Heart right ventricle (tissue), 16 donors: ENCODE measurements at regions of chr21 and their contacts with region 1.

Region 1: GRCh38 chr21:31088315-31088714 is 50.0 kb upstream of the KRTAP19-8 start:
- DNase-seq: no peak
- ATAC-seq: no peak
- H3K4me3 ChIP-seq: no peak overlapping the region
- H3K27ac ChIP-seq: no peak overlapping the region
- H3K4me1 ChIP-seq: peaks cover 0 to 8% (median 0%) of the 10 kb centered on the region in 9 donors
- H3K27me3 ChIP-seq: peaks cover 0 to 4% (median 0%) of the 10 kb centered on the region in 7 donors
- CTCF ChIP-seq: no peak

Region 2: DNA sequence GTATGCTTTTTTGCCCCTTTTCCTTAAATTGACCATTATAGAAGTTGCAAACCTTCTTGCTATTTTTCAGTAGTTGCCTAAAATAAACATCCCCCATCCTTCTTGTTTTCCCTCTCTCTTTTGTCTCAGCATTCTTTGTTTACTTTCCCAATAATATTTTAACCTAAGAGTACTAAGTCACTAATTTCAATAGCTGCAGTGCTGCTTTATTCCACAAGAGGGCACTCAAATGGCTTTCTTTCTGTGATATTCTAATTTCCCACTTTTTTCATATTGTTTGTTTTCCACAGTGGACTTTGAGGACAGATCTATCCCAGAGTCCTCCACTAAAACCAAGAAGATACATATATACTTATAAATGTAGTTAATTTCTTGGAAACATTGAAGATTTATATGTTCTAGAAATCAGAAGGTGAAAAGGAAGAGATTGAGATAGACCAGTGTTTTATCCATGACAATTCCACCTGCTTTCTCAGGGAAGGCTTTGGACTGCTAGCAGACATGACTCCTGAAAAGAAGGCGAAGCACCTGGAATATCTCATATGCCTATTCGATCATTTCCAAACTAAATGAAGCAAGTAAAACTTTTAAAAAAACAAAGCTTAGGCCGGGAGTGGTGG is 1043.8 kb before region 1 on chr21:
- intact Hi-C with region 1: loop called in 5 of 10 experiments (anchors 5 to 10 kb)
- DNase-seq: peak in 1 of 2 donors; percentile 6
- ATAC-seq: no peak
- H3K4me3 ChIP-seq: no peak overlapping the region
- H3K27ac ChIP-seq: no peak overlapping the region
- H3K4me1 ChIP-seq: no peaks in the 10 kb centered on the region
- H3K27me3 ChIP-seq: no peaks in the 10 kb centered on the region
- CTCF ChIP-seq: peak; percentile 70 to 88 (median 82)

Region 3: GRCh38 chr21:30340441-30341241 is 747.7 kb before region 1 on chr21:
- intact Hi-C with region 1: loop called (anchors 5 to 10 kb)
- DNase-seq: peak in 1 of 2 donors; percentile 20
- ATAC-seq: no peak
- H3K4me3 ChIP-seq: no peak overlapping the region
- H3K27ac ChIP-seq: no peak overlapping the region
- H3K4me1 ChIP-seq: no peaks in the 10 kb centered on the region
- H3K27me3 ChIP-seq: no peaks in the 10 kb centered on the region
- CTCF ChIP-seq: peak; percentile 58 to 86 (median 80)

Region 4: GRCh38 chr21:30444204-30444603 is 644.1 kb before region 1 on chr21:
- intact Hi-C with region 1: loop called in 4 of 10 experiments (anchors 5 to 10 kb)
- DNase-seq: peak in 1 of 2 donors; percentile 4
- ATAC-seq: peak in 6 of 8 donors; percentile 25 to 79 (median 60)
- H3K4me3 ChIP-seq: no peak overlapping the region
- H3K27ac ChIP-seq: no peak overlapping the region
- H3K4me1 ChIP-seq: no peaks in the 10 kb centered on the region
- H3K27me3 ChIP-seq: no peaks in the 10 kb centered on the region
- CTCF ChIP-seq: peak in 7 of 9 donors; percentile 13 to 55 (median 52)

Region 5: GRCh38 chr21:30831194-30831765 is 257.0 kb before region 1 on chr21:
- intact Hi-C with region 1: loop called (anchors 2 to 10 kb)
- DNase-seq: no peak
- ATAC-seq: no peak
- H3K4me3 ChIP-seq: no peak overlapping the region
- H3K27ac ChIP-seq: no peak overlapping the region
- H3K4me1 ChIP-seq: no peaks in the 10 kb centered on the region
- H3K27me3 ChIP-seq: peaks cover 0 to 4% (median 0%) of the 10 kb centered on the region in 7 donors
- CTCF ChIP-seq: peak; percentile 27 to 56 (median 52)

Region 6: GRCh38 chr21:30932686-30933085 is 155.6 kb before region 1 on chr21:
- intact Hi-C with region 1: loop called in 1 of 10 experiments (anchors 5 kb)
- DNase-seq: no peak
- ATAC-seq: no peak
- H3K4me3 ChIP-seq: no peak overlapping the region
- H3K27ac ChIP-seq: no peak overlapping the region
- H3K4me1 ChIP-seq: no peaks in the 10 kb centered on the region
- H3K27me3 ChIP-seq: no peaks in the 10 kb centered on the region
- CTCF ChIP-seq: no peak